Colonic mucosa (tissue), 4 donors: ENCODE measurements at regions of chr1 and their contacts with region 1.

Region 1: DNA sequence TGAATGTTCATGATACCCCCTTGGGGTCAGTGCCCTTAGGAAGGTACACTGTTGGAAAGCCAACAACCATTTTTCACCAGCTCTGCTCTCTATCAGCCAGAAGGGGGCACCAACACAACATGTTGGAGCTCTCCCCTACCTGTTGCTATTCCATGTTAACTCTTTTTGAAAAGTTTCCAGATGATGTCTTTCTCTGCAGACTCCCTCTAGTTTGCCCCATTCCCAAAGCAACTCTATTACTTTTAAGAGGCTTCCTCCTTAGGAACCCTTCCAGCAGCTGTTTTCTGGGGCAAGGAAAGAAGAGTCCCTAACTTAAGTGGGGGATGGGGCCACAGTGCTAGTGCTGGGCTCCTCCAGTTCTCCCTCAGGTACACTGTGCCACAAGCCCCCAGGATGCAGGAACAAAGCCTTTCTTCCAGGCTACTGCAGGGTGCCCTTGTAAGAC is 22.9 kb upstream of the NDC1 start:
- DNase-seq: peak; percentile 34
- H3K4me3 ChIP-seq: no peak overlapping the region
- H3K27ac ChIP-seq: no peak overlapping the region
- H3K4me1 ChIP-seq: no peaks in the 10 kb centered on the region
- H3K27me3 ChIP-seq: no peaks in the 10 kb centered on the region
- CTCF ChIP-seq: peak; percentile 75

Region 2: DNA sequence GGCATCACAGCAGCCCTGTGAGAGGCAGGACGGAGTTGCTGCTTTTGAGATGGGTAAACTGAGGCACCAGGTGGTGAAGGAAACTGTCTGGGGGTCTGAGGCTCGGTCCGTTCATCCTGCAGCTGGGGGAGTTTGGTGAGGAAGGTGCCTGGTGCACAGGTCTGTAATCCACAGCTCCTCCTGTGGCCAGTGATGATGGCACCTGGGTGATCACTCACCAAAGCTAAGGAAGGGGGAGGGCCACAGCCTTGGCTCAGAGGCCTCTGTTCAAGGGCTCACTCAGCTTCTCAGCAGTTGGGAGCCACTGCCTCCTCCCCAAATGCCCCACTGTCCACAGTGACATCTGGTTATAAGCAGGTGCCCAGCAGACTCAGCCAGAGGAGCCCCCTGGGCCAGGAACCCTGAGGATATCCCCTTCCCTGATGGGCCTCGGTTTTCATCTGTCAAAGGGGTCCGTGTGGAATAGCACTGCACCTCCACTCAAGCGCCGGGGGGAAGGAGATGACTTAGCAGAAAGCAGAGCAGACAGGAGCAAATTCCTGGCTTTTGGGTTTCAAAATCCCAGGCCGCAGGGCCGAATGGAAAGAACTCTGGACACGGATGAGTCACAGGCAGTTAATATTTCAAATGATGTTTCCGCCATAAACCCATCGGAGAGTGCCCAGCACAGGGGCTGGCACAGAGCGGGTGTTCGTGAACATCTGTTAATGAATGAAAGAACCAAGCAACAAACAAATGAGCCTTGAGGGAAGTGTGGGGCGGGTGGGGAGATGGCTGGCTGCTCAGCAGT is 319.0 kb before region 1 on chr1:
- intact Hi-C with region 1: no loop called
- DNase-seq: no peak
- H3K4me3 ChIP-seq: no peak overlapping the region
- H3K27ac ChIP-seq: no peak overlapping the region
- H3K4me1 ChIP-seq: no peaks in the 10 kb centered on the region
- H3K27me3 ChIP-seq: no peaks in the 10 kb centered on the region
- CTCF ChIP-seq: peak; percentile 14

Region 3: GRCh38 chr1:53938136-53938830 is 77.3 kb after region 1 on chr1:
- intact Hi-C with region 1: no loop called
- DNase-seq: no peak
- H3K4me3 ChIP-seq: no peak overlapping the region
- H3K27ac ChIP-seq: no peak overlapping the region
- H3K4me1 ChIP-seq: no peaks in the 10 kb centered on the region
- H3K27me3 ChIP-seq: no peaks in the 10 kb centered on the region
- CTCF ChIP-seq: no peak

Region 4: DNA sequence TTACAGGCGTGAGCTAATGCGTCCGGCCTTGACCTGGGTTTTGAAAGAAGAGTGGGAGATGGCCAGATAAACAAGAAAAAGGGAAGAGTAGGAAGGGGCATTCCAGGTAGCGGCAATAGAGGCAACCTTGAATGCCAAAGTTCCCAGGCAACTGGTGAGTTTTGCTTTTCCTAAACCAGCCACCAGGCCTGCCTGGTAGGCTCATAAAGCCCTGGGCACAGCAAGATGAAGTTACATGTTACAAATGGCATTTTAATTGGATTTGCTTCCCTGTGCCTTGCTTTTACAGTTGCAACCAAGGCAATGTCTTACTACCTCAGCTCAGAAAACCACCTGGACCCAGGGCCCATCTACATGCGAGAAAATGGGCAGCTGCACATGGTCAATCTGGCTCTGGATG is 90.7 kb after region 1 on chr1:
- intact Hi-C with region 1: loop called (anchors 5 kb)
- DNase-seq: no peak
- H3K4me3 ChIP-seq: no peak overlapping the region
- H3K27ac ChIP-seq: no peak overlapping the region
- H3K4me1 ChIP-seq: no peaks in the 10 kb centered on the region
- H3K27me3 ChIP-seq: no peaks in the 10 kb centered on the region
- CTCF ChIP-seq: no peak